Endothelial cell of umbilical vein (primary cell): ENCODE measurements at regions of chr5 and their contacts with region 1.

Region 1: DNA sequence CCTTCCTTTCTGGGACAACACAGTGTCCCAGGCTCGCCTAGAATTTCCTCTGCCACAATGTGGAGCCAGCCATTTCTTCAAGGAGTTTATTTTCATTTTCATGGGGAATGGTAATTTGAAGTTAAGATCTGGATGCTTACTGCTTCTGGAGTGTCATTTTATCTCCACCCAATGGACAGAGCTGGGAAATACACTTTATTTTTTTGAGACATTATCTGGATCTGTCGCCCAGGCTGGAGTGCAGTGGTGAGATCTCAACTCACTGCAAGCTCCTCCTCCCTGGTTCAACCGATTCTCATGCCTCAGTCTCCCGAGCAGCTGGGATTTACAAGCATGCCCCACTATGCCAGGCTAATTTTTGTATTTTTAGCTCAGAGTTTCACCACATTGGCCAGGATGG is 12.7 kb upstream of the THG1L start:
- DNase-seq: peak; percentile 78
- H3K4me3 ChIP-seq: no peak overlapping the region
- H3K27ac ChIP-seq: no peak overlapping the region
- H3K4me1 ChIP-seq: no peaks in the 10 kb centered on the region
- H3K27me3 ChIP-seq: no peaks in the 10 kb centered on the region
- CTCF ChIP-seq: peak; percentile 46 to 56
- POLR2A ChIP-seq: no peak

Region 2: DNA sequence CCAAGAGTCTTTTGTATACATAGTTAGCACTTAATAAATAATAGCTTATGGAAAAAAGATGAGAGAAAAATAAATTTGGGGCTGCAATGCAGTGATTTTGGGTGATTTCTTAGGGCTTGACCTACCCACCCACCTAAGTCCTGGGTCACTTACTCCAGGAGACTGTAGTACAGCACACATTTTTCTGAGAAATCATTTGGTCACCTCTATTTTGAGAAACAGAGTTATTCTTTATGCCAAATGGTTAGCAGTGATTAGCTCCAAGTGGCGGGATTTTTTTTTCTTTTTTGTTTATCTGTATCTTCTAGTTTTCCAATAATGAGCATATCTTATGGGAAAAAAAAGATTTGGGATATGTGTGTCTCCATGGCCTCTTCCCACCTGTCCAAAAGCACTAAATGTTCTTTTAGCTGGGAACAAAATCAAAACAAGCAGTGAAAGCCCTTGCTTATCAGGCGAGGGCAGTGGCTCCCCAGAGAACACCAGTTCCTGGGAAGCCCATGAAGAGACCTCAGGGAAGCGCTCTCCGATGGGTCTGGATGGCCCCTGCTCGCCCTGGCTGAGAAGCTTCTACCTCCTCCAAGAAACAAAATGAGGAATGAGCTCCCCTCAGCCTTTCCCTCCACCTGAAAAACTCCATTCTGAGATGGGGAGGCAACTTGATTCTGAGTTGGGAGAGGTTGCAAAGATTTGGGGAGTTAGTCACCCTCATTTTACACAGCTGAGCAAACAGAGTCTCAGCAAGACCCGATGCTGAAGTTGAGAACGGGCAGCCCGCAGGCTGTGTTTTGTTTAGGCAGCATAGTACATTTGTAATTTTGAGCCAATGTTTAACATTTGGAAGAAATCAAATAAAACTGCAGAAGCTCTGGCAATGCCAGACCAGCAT is 382.7 kb before region 1 on chr5:
- CTCF ChIA-PET with region 1: interaction called, 11 read pairs
- POLR2A ChIA-PET with region 1: no interaction called
- dilution Hi-C with region 1: no loop called
- intact Hi-C with region 1: no loop called
- DNase-seq: no peak
- H3K4me3 ChIP-seq: no peak overlapping the region
- H3K27ac ChIP-seq: no peak overlapping the region
- H3K4me1 ChIP-seq: no peaks in the 10 kb centered on the region
- H3K27me3 ChIP-seq: peaks cover 0 to 2% of the 10 kb centered on the region in 2 experiments
- CTCF ChIP-seq: no peak
- POLR2A ChIP-seq: no peak

Region 3: DNA sequence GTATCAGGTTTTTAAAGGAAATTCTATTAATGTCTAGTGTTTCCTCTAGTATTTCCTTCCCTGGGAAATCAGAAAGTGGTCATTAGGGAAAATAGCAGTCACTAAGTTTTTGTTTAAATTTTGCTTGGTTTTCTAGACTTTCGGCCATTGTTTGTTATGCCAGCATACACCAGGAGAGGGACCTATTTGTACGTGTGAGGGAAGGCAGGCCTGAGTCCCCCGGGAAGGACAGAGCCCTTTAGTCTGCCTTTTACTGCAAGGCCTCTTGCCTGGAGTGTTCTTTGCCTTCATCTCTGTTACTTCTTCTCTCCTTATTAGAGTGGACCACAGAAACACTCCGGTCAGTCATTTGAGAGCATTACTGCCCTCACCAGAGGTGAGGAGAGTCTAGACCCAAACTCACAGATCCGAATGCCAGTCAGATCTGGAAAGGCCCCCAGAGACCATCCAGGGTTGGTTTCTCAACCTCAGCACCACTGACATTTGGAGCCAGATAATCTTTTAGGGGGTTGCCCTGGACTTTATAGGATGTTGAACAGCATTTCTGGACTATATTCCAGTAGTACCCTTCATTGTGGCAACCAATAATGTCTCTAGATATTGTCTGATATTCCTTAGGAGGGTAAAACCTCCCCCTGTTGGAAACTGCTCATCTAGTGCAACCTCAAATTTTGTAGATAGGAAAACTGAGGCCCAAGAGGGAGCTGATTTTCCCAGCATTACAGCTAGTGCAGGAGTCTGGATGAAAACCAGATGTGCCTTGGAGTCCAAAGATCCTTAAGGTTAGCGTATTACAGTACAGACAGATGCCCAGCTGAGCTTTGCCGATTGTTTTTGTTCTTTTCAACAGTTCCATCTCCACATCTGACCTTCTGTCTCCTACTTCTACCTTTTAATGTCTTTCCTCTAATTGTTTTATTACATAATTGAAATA is 351.5 kb before region 1 on chr5:
- CTCF ChIA-PET with region 1: interaction called, 5 read pairs
- POLR2A ChIA-PET with region 1: no interaction called
- dilution Hi-C with region 1: no loop called
- intact Hi-C with region 1: loop called (anchors 1 kb)
- DNase-seq: peak; percentile 70
- H3K4me3 ChIP-seq: no peak overlapping the region
- H3K27ac ChIP-seq: no peak overlapping the region
- H3K4me1 ChIP-seq: no peaks in the 10 kb centered on the region
- H3K27me3 ChIP-seq: no peaks in the 10 kb centered on the region
- CTCF ChIP-seq: peak; percentile 60 to 71
- POLR2A ChIP-seq: no peak

Region 4: GRCh38 chr5:157476702-157477408 is 241.7 kb before region 1 on chr5:
- CTCF ChIA-PET with region 1: interaction called, 19 read pairs
- POLR2A ChIA-PET with region 1: interaction called, 7 read pairs
- dilution Hi-C with region 1: no loop called
- intact Hi-C with region 1: loop called (anchors 1 kb)
- DNase-seq: peak; percentile 67
- H3K4me3 ChIP-seq: no peak overlapping the region
- H3K27ac ChIP-seq: no peak overlapping the region
- H3K4me1 ChIP-seq: peaks cover 6% of the 10 kb centered on the region
- H3K27me3 ChIP-seq: peaks cover 0 to 2% of the 10 kb centered on the region in 2 experiments
- CTCF ChIP-seq: peak; percentile 73 to 77
- POLR2A ChIP-seq: no peak

Region 5: DNA sequence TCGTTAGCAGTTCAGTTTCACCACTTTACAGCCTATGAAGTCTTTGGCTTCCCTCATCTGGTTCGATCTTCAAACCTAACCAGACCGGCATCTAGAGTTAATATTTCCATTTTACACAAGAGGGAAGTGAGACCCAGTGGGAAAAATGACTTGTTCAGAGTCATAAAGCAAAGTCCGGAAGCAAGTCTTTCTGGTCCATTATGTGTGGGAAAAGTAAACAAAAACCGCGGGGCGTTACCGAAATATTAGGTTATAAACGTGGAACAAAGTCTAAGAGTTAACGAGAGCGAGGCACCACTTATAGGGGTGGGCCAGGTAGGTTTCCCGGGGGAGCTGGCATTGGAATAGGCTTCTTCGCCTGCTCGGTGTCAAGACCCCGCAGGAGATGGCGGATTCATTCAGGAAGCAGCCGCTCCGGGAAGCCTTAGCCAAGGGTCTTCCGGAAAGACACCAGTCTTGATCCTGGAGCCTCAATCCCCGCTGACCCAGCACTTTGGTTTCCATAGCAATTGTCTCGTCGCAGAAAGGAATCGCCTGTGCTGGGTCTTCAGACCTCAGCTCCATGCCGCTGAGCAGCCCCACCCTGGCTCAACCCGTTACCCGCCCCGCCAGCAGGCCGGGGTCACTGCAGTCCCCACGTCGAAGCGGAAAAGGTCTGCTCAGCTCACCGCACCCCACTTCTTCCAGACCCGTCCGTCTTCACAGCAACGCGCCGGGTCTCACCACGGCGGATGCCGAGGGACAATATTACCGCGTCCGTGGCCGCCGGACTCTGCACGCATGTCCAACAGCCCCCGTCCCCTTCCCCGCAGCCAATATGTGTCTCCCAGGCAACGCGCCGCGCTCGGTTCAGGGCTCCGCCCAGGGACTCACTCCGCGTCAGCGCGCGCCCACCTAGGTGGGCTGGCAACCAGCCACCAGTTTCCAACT is 47.6 kb before region 1 on chr5 and contains the start of gene C5orf52:
- CTCF ChIA-PET with region 1: interaction called, 18 read pairs
- POLR2A ChIA-PET with region 1: no interaction called
- dilution Hi-C with region 1: no loop called
- intact Hi-C with region 1: loop called (anchors 1 kb)
- DNase-seq: peak; percentile 54
- H3K4me3 ChIP-seq: peak within 1 kb of the TSS; percentile 41 to 63 (median 47)
- H3K27ac ChIP-seq: no peak within 1 kb of the TSS
- H3K4me1 ChIP-seq: peaks cover 13% of the 10 kb centered on the region
- H3K27me3 ChIP-seq: peaks cover 7% of the 10 kb centered on the region in 2 experiments
- CTCF ChIP-seq: no peak
- POLR2A ChIP-seq: no peak
- total RNA-seq, gene C5orf52: not detected in 2 replicates